Colonic mucosa (tissue), 4 donors: ENCODE measurements at regions of chr6 and their contacts with region 1.

Region 1: GRCh38 chr6:71342772-71343171 is 54.2 kb downstream of the OGFRL1 start:
- DNase-seq: no peak
- H3K4me3 ChIP-seq: no peak overlapping the region
- H3K27ac ChIP-seq: no peak overlapping the region
- H3K4me1 ChIP-seq: no peaks in the 10 kb centered on the region
- H3K27me3 ChIP-seq: no peaks in the 10 kb centered on the region
- CTCF ChIP-seq: no peak

Region 2: DNA sequence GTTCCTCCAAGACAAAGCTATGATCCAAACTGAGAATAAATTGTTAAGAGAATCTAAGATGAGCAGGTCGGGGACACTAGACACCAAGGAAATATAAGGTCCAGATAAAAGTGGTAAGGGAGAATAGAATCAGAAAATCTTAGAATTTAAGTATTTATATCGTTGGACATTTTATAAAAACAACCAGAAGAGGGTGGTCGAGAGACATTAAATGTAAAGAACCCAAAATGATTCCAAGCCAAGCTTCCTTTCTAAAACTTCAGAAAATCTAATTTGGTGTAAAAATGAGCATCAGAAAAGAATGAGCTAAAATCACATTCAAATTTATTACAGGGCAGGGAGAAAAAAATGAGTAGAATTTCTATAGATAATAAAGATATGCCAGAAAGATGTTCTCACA is 152.0 kb before region 1 on chr6:
- intact Hi-C with region 1: loop called (anchors 5 kb)
- DNase-seq: no peak
- H3K4me3 ChIP-seq: no peak overlapping the region
- H3K27ac ChIP-seq: no peak overlapping the region
- H3K4me1 ChIP-seq: no peaks in the 10 kb centered on the region
- H3K27me3 ChIP-seq: no peaks in the 10 kb centered on the region
- CTCF ChIP-seq: no peak